Aorta (tissue), 5 donors: ENCODE measurements at regions of chr2 and their contacts with region 1.

Region 1: DNA sequence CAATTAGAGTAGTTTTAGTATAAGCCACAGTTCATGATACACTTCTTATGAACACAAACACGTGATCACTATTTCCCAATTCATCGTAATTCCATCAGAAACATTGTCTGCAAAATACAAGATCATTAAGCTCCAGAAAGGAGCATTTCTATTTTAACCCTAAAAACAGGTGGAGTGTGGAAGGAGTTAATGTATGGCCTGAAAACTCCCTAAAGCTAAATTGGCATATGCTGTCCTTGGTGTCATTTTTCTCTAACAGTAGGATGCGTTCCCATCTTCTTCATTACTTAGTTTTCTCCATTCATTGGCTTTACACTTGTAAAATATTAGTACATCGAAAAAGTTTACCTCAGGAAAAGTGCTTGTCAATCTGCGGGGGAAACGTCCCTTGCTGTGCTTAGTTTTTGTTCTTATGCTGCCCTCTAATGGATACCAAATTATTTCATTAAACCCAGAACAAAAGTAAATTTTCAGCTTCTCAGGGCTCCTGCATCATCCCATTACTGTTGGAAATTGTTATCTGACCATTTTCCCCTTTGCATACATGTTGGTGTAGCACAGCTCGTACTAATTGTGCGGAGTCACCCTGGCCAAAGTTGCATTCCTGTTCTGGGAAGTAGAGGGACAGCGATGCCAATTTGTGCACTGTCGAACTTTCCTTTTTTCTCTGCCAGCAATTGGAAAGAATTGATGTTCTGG is 153.4 kb downstream of the GPD2 start:
- DNase-seq: no peak
- ATAC-seq: peak; percentile 60
- H3K4me3 ChIP-seq: no peak overlapping the region
- H3K27ac ChIP-seq: no peak overlapping the region
- H3K4me1 ChIP-seq: no peaks in the 10 kb centered on the region
- H3K27me3 ChIP-seq: no peaks in the 10 kb centered on the region

Region 2: GRCh38 chr2:155382776-155383175 is 1206.8 kb before region 1 on chr2:
- intact Hi-C with region 1: loop called in 1 of 2 experiments (anchors 10 kb)
- DNase-seq: no peak
- ATAC-seq: no peak
- H3K4me3 ChIP-seq: no peak overlapping the region
- H3K27ac ChIP-seq: no peak overlapping the region
- H3K4me1 ChIP-seq: no peaks in the 10 kb centered on the region
- H3K27me3 ChIP-seq: no peaks in the 10 kb centered on the region

Region 3: DNA sequence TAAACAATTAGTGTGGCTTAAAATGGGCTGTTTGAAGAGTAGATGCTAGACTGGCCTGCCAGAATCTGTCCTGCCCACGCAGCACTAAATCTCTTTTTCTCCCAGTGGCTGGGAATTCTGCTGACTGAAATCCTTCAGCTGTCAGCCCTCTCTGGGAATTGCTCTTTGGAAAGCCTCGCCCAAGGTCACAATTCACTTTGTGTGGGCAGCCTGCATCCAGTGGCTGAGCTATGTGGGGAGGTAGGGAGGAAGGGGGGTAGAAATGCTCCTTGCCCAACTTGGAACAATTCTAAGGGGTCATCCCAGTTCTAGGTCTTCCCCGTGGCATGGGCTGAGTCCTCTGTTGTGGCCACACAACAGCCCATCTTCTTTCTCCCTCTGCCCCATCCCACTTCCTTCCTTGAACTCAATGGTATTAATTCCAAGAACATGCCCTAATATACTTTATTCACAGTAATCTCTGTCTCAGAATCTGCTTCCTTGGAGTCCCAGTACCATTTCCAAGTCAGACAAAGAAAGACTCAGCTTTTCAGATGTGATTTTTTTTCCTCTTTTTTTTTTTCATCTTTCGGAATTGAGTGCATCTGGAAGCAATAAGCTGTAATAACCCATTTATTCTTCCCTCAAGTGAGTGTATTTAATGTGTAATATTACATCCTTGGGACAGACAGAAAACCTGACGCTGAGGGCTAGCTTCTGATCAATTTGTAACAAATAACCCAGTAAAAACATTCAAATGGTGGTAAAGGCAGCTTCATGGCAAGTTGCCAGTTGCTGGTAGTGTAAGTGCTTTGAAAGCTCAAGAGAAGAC is 36.0 kb after region 1 on chr2:
- intact Hi-C with region 1: no loop called
- DNase-seq: no peak
- ATAC-seq: peak; percentile 11
- H3K4me3 ChIP-seq: no peak overlapping the region
- H3K27ac ChIP-seq: no peak overlapping the region
- H3K4me1 ChIP-seq: no peaks in the 10 kb centered on the region
- H3K27me3 ChIP-seq: no peaks in the 10 kb centered on the region

Region 4: DNA sequence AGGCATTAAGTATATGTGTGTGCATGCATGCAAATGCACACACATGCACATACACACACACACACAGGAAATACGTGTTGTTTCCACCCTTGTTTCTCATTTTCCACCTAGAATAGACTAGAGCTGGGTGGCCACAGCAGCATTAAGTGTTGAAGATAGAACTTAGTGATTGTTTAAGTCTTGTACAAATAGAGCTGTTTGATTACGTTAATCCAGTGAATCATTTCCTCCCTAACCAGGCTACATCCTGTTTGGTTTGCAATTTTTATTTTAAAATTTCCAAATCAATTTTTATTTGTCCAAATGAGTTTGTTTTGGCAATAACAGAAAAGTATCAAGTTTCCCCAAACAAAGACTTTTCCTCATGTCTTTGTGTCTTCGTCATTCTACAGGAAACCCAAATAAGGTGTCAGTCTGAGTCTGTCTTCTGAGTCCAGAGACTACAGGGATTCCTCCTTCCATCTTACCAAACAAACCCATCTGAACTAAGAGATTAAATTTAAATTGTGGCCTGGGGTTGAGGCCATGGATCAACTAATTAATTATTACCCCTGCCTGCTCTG is 593.4 kb after region 1 on chr2:
- intact Hi-C with region 1: loop called in 1 of 2 experiments (anchors 10 kb)
- DNase-seq: no peak
- ATAC-seq: no peak
- H3K4me3 ChIP-seq: no peak overlapping the region
- H3K27ac ChIP-seq: no peak overlapping the region
- H3K4me1 ChIP-seq: peaks cover 0 to 4% of the 10 kb centered on the region in 2 donors
- H3K27me3 ChIP-seq: no peaks in the 10 kb centered on the region

Region 5: DNA sequence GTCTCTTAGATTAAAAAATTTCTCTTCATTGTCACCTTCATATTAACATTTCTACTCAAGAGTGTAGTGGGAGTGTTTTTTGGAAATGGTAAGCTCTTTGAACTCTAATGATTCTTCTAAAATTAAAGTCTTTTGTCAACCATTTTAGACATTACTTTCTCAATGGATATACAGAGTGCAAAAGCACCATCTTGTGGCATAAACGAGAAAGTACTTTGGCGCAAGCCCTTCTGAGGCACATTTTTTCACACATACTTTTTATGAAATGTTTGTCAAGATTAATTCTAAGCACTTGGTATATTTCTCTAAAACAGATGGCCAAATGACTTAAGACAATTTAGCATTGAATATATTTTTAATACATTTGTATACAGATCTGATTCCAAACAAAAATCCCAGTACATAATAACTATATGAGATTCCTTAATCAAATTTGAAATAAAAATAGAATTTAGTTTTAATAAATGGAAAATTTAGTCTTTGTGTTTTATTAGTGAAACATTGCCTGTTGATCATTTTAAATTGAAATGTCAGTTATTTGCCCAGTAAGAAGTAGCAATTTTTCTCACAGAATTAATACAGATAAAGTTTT is 604.7 kb after region 1 on chr2:
- intact Hi-C with region 1: loop called (anchors 5 to 10 kb)
- DNase-seq: no peak
- ATAC-seq: no peak
- H3K4me3 ChIP-seq: no peak overlapping the region
- H3K27ac ChIP-seq: no peak overlapping the region
- H3K4me1 ChIP-seq: no peaks in the 10 kb centered on the region
- H3K27me3 ChIP-seq: no peaks in the 10 kb centered on the region